ENCODE measurements at regions of chr19 and their contacts with region 1.

Region 1: DNA sequence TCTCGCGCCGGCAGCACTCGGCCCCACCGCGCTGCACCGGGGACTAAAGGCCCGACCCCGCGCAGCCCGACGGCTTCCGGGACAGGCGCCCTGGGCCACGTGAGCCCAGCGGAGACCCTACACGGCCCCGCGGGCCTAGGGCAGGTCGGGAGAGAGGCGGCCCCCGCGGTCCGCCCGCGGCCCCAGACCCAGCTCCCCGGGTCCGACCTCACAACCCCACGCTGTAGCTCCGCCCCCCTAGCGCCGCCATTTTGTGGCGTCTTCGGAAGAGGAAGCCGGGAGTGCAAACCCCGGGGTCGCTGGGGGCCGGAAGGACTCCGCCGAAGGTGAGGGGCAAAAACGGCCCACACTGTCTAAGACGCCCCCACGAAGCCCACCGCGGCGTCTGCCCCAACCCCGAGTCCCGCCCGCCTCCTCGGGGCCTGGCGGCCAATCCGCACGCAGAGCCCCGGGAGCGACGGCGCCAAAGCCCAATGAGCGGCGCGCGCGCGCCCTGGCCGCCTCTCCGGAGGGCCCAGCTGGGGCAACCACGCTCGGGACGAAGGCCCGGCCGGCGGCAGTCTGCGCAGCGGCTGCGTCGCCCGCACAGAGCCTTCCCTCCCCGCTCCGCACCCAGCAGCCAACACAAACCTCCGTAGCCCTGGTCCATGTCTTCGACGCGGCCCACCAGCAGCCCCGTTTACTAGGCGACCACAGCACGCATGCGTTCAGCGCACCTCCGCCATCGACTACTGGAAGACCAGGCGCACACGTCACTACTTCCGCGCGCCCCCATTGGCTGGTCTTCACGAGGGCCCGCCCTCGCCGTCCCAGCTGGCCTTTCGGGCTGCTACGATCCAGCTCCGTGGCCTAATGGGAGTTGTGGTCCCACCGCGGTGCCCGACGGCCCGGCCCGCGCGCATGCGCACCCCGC is at the start of gene AKAP8:
- DNase-seq: peak; percentile 98 to 99 (median 98)
- H3K4me3 ChIP-seq: peak within 1 kb of the TSS; percentile 97
- H3K27ac ChIP-seq: peak within 1 kb of the TSS; percentile 82 to 97
- H3K4me1 ChIP-seq: peaks cover 20% of the 10 kb centered on the region
- H3K27me3 ChIP-seq: no peaks in the 10 kb centered on the region
- CTCF ChIP-seq: no peak
- EP300 ChIP-seq: no peak
- POLR2A ChIP-seq: peak; percentile 91
- total RNA-seq, gene AKAP8: 19.1 to 53.3 (median 46.4) TPM

Region 2: DNA sequence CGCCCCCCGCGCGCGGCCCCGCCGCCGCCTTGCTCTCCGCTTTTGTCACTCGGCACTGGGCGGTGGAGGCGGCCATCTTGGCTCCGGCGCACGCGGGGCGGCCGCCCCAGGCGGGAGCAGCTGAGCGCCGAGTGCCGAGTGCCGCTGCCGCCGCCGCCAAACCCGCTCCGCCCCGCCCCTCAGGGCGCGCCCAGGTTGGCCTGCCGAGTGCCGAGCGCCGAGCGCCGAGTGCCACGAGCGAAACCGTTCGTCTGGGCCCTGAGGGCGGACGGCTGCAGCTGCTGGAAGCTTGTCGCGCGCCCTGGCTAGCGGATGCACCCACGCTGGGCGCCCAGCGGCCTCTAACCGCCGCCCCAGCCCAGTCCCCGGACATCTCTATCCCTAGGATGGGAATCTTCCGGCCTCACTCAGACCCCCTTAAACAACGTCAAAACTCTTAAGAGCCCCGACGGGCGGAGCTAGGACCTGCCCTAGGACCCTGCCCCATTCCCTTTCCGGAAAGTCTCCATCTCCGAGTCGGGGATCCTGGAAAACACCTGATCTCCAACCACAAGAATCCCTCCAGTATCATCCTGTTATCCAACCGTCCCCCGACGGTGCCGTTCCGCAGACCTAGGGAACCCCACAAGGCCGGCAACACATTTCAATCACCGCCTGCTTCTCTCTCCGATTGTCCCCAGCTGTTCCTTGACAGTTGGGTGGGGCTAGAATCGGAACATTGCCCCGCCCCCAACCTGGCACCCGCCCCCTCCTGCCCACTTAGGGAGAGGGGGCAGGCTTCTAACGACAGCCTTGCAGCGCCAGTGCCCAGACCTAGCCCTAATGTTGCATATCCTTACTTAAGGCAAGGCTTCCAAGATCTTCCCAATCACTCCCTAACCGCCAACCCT is 53.5 kb after region 1 on chr19:
- intact Hi-C with region 1: loop called in 1 of 4 experiments (anchors 10 kb)
- DNase-seq: peak; percentile 89 to 95 (median 91)
- H3K4me3 ChIP-seq: peak overlapping the region; percentile 52
- H3K27ac ChIP-seq: peak overlapping the region; percentile 52 to 63
- H3K4me1 ChIP-seq: peaks cover 13% of the 10 kb centered on the region
- H3K27me3 ChIP-seq: no peaks in the 10 kb centered on the region
- CTCF ChIP-seq: no peak
- EP300 ChIP-seq: no peak
- POLR2A ChIP-seq: peak; percentile 30

Region 3: GRCh38 chr19:15584541-15585115 is 205.3 kb after region 1 on chr19:
- intact Hi-C with region 1: no loop called
- DNase-seq: peak; percentile 77 to 87 (median 83)
- H3K4me3 ChIP-seq: no peak overlapping the region
- H3K27ac ChIP-seq: no peak overlapping the region
- H3K4me1 ChIP-seq: no peaks in the 10 kb centered on the region
- H3K27me3 ChIP-seq: no peaks in the 10 kb centered on the region
- CTCF ChIP-seq: peak; percentile 78 to 82 (median 80)
- EP300 ChIP-seq: no peak
- POLR2A ChIP-seq: no peak